ENCODE measurements at regions of chr11 and their contacts with region 1.

Region 1: DNA sequence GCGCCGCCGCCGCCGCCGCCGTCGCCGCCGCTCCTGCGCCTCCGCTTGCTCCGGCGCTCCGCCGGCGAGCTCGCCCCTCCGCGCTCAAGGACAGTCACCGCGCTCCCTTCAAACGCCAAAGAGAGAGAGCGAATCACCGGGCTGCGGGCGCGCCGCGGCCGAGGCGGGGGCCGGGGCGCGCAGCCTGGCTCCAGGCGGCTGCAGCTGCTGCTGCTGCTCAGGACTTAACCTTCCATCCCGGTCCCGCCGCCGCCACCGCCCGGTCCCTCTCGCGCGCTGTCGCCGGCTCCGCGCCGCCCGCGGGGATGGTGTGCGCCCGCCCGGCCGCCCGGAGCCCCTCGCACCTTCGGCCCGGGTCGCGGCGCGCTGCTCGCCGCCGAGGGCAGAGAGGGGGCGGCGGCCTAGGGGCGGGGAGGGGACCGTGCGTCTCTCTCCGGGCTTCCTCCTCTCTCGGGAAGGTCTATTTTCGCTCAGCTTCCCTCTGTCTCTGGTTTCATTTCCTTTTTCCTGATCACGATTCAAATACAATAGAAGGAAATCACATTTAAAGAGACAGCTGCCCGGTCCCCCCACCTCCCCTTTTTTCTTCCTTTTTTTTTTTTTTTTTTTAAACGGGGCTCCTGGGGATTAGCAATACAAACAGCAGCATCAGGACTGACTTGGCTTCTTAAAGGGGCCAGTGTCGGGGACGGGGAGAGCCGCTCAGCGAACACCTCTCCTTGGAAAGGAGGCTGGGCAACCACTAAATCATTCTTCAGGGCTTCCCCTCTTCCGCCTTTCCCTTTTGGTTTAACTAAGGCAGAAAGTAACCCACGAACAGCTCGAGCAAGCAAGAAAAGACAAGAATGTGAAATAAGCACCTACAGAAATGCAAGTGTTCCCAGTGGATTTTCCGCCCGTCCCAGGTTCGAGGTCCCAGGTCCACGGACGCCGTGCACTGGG is 22.1 kb downstream of the LMO2 start:
- DNase-seq: peak; percentile 83

Region 2: DNA sequence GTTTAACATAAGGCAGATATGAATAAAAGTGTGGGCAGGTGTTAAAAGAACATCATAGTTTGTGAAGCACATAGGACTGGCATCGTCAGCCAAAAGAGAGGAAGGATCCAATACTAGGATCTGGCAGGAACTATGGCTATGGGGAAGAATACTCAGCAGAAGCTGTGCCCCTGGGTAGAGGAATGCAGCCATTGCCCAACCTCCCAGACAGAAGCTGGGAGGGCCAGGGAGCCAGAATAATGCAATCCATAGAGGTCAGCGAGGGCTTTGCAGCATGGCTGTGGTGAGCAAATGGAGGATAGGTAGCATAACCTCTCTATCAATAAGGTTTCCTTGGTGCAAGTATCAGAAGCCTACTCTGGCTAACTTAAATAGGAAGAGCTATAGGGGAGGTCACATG is 696.8 kb before region 1 on chr11:
- intact Hi-C with region 1: no loop called
- DNase-seq: no peak

Region 3: GRCh38 chr11:33936725-33937604 is 67.2 kb after region 1 on chr11:
- intact Hi-C with region 1: loop called (anchors 2 kb)
- DNase-seq: peak; percentile 90

Region 4: DNA sequence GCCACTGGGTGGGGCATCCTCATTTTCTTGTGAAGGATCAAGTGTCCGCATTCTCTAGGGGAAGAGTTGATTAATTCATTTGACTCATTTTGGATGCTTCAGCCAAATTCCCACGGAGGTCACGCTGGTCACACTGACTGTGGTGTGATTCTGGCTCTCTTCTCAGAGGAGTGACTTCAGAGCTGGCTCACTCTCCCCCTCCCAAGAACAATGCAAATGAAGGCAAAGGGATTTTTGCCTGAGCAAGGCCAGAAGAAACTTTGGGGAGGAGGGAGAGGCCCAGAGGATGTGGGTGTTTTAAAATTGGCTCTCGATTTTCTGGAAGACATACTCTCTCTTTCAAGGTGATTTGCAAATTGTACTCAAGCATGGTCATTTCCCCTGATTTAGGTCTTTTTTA is 73.2 kb after region 1 on chr11:
- intact Hi-C with region 1: loop called (anchors 2 kb)
- DNase-seq: no peak

Region 5: GRCh38 chr11:34266090-34266912 is 396.5 kb after region 1 on chr11:
- intact Hi-C with region 1: no loop called
- DNase-seq: no peak